ENCODE measurements at regions of chr4 and their contacts with region 1.

Region 1: DNA sequence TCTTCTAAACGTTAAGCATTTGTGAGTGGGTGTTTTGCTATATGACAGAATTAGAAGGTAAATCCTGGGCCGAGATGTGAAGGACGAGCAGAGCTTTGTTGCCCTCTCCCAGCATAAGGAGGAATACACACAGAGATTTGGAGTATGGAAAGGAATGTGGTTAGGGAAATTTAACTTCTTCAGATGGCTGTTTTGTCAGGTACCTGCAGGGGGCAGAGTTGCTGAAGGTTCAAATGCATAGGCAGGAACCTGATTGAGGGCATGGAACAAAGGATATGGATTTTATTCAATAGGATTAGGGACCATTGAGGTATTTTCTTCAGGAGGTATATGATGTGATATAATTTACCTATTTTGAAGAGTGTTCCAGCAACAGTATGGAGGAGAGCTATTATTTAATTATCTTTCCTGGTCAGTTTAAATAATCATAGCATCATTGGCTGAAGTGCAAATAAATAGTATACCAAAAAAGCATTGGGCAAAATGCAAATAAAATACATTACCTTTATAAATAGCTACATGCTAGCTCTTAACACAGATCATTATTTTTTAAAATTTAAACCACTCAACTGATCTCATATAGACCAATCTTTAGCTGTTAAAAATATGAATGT is 143.6 kb downstream of the SLIT2 start:
- DNase-seq: peak; percentile 73
- ATAC-seq: peak; percentile 94
- H3K4me3 Mint-ChIP-seq: no peak overlapping the region
- H3K27ac Mint-ChIP-seq: no peak overlapping the region
- H3K4me1 Mint-ChIP-seq: peaks cover 17% of the 10 kb centered on the region
- H3K27me3 Mint-ChIP-seq: no peaks in the 10 kb centered on the region
- CTCF ChIP-seq: peak; percentile 60

Region 2: DNA sequence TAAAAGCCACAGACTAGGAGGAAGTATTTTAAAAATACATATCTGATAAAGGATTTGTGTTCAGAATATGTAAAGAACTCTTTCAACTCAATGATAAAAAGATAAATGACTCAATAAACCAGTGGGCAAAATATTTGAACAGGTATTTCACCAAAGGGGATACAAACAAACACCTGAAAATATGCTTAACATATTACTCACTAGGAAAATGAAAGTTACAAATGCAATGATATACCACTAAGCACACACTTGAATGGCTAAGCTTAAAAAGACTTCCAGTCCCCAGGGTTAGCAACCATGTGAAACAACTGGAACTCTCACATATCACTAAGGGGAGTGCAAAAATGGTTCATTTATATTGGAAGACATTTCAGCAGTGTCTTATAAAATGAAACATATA is 12.0 kb before region 1 on chr4:
- CTCF ChIA-PET with region 1: interaction called, 15 read pairs
- POLR2A ChIA-PET with region 1: no interaction called
- DNase-seq: no peak
- ATAC-seq: no peak
- H3K4me3 Mint-ChIP-seq: no peak overlapping the region
- H3K27ac Mint-ChIP-seq: no peak overlapping the region
- H3K4me1 Mint-ChIP-seq: peaks cover 5% of the 10 kb centered on the region
- H3K27me3 Mint-ChIP-seq: no peaks in the 10 kb centered on the region
- CTCF ChIP-seq: no peak